Heart right ventricle (tissue), 16 donors: ENCODE measurements at regions of chr4 and their contacts with region 1.

Region 1: DNA sequence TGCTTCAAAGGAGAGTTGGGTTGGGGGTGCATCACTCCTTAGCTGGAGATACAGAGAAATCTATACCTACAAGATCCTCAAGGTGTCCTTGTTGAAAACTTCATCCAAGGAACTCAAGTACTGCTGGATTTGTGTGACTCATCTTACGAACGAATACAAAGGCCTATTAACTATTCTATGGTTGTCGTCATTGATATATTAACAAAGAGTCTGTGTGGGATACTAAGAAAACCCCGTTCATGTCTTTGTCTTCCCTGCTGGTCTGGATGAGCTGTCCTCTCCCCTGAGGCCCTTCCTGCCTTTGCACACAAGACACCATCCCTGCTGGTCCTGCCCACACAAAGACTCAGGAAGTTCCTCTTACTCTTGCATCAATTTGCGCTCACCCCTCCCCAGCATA is 54.9 kb upstream of the IRF2 start:
- DNase-seq: no peak
- ATAC-seq: no peak
- H3K4me3 ChIP-seq: no peak overlapping the region
- H3K27ac ChIP-seq: no peak overlapping the region
- H3K4me1 ChIP-seq: peaks cover 0 to 26% (median 7%) of the 10 kb centered on the region in 9 donors
- H3K27me3 ChIP-seq: no peaks in the 10 kb centered on the region
- CTCF ChIP-seq: no peak

Region 2: GRCh38 chr4:184489771-184490170 is 39.5 kb before region 1 on chr4:
- intact Hi-C with region 1: loop called in 1 of 10 experiments (anchors 5 kb)
- DNase-seq: no peak
- ATAC-seq: no peak
- H3K4me3 ChIP-seq: no peak overlapping the region
- H3K27ac ChIP-seq: no peak overlapping the region
- H3K4me1 ChIP-seq: no peaks in the 10 kb centered on the region
- H3K27me3 ChIP-seq: no peaks in the 10 kb centered on the region
- CTCF ChIP-seq: no peak

Region 3: DNA sequence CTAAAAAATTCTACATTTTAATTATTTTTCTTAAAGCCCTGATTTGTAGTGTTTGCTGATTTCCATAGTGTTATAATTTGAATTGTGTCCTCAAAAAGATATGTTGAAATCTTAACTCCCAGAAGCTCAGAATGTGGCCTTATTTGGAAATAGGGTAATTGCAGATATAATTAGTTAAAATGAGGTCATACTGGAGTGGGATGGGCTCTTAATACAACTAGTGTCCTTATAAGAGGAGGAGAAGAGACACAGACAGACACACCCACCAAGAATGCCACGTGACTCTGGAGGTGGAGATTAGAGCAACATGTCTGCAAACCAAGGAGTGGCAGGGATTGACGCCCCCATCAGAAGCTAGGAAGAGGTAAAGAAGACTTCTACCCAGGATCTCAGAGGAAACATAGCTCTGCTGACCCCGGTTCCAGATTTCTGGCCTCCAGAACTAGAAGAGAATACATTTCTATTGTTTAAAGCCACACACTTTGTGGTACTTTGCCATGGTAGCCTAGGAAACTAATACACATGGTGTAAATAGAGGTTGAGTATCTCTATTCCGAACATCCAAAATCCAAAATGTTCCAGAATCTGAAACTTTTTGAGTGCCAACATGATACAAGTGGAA is 15.6 kb after region 1 on chr4:
- intact Hi-C with region 1: no loop called
- DNase-seq: no peak
- ATAC-seq: peak in 4 of 8 donors; percentile 21 to 39 (median 36)
- H3K4me3 ChIP-seq: no peak overlapping the region
- H3K27ac ChIP-seq: no peak overlapping the region
- H3K4me1 ChIP-seq: peaks cover 0 to 5% (median 0%) of the 10 kb centered on the region in 9 donors
- H3K27me3 ChIP-seq: no peaks in the 10 kb centered on the region
- CTCF ChIP-seq: no peak

Region 4: GRCh38 chr4:184563621-184564020 is 34.3 kb after region 1 on chr4:
- intact Hi-C with region 1: no loop called
- DNase-seq: no peak
- ATAC-seq: no peak
- H3K4me3 ChIP-seq: no peak overlapping the region
- H3K27ac ChIP-seq: no peak overlapping the region
- H3K4me1 ChIP-seq: peaks cover 0 to 6% (median 3%) of the 10 kb centered on the region in 9 donors
- H3K27me3 ChIP-seq: no peaks in the 10 kb centered on the region
- CTCF ChIP-seq: no peak

Region 5: GRCh38 chr4:184896868-184897715 is 367.8 kb after region 1 on chr4:
- intact Hi-C with region 1: no loop called
- DNase-seq: no peak
- ATAC-seq: peak in 5 of 8 donors; percentile 30 to 60 (median 46)
- H3K4me3 ChIP-seq: no peak overlapping the region
- H3K27ac ChIP-seq: peak overlapping the region in 2 of 10 donors; percentile 2 to 64
- H3K4me1 ChIP-seq: peaks cover 0 to 51% (median 6%) of the 10 kb centered on the region in 9 donors
- H3K27me3 ChIP-seq: peaks cover 0 to 8% (median 0%) of the 10 kb centered on the region in 7 donors
- CTCF ChIP-seq: no peak